ENCODE measurements at regions of chr15 and their contacts with region 1.

Region 1: DNA sequence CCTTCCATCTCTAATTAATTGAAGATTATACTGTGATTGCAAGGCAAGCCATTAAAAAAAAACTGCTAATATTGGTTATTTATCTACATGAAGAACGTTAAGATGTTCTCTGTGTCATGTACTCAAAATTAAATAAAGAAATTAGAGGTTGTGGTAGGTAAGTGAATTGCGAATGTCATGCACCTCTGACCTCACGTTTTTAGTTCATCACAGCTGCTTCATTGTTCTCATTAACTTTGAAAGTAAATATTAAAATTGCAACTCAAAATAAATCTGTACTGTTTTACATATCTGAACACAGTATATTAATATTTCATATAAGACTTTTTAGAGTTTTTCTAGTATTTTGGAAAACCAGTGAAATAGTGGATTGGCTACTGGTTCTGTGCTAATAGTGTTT is 94.0 kb downstream of the KLHL25 start:
- DNase-seq: no peak
- CTCF ChIP-seq: no peak

Region 2: DNA sequence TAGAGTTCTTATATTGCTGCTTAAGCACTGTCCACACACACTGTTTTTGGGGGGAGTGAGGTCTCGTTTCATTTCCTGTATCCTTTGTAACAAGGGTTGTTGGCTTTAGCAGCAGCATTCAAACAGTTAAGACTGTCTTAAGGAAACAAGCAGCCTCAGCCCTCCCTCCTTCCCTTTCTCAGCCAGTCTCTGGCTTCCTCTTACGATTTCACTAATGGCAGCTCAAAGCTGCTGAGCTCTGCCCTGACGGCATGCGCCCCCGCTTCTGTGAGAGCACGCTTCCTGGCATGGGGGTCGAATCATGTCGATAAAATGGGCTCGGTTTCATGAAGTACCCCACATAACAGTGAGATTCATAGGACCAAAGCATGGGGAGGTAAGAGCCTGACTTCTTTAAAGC is 11.0 kb before region 1 on chr15:
- CTCF ChIA-PET with region 1: interaction called, 29 read pairs
- POLR2A ChIA-PET with region 1: interaction called, 8 read pairs
- DNase-seq: peak; percentile 42
- CTCF ChIP-seq: no peak